ENCODE measurements at regions of chr1 and their contacts with region 1.

Region 1: GRCh38 chr1:155934097-155934935 is at the start of gene KHDC4:
- DNase-seq: peak; percentile 88
- ATAC-seq: peak; percentile 97
- H3K4me3 Mint-ChIP-seq: no peak within 1 kb of the TSS
- H3K27ac Mint-ChIP-seq: no peak within 1 kb of the TSS
- H3K4me1 Mint-ChIP-seq: peaks cover 28% of the 10 kb centered on the region
- H3K27me3 Mint-ChIP-seq: no peaks in the 10 kb centered on the region
- total RNA-seq, gene KHDC4: 91.6 to 94.5 TPM

Region 2: DNA sequence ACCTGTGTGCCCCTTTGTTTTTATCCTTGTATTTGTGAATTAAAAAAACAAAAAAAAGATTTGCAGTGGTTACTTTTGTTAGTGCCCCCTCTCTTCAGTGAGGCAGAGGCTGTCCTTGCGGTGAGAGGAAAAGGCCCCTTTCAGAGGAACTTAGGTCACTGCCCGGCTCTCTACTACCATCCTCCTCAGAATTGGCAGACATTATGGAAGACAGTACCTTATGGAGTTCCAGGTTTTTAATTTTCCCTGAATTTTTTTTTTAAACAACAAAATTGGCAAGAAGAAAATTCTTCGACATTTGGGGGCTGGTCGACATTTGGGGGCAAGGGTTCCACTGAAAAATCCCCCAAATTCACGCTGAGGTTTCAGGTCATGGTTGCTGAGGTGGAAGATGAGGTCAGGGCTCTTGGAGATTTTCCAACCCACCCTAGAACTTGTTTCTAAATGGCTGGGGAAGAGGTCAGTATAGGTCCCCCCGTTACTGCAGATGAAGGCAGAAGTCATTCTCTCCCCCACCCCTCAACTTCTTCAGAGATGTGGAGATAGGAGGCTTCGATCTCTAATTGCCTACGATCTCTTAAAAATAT is 12.4 kb after region 1 on chr1:
- POLR2A ChIA-PET with region 1: interaction called, 15 read pairs
- DNase-seq: no peak
- ATAC-seq: no peak
- H3K4me3 Mint-ChIP-seq: peak overlapping the region; percentile 71
- H3K27ac Mint-ChIP-seq: peak overlapping the region; percentile 91
- H3K4me1 Mint-ChIP-seq: peaks cover 35% of the 10 kb centered on the region
- H3K27me3 Mint-ChIP-seq: no peaks in the 10 kb centered on the region

Region 3: DNA sequence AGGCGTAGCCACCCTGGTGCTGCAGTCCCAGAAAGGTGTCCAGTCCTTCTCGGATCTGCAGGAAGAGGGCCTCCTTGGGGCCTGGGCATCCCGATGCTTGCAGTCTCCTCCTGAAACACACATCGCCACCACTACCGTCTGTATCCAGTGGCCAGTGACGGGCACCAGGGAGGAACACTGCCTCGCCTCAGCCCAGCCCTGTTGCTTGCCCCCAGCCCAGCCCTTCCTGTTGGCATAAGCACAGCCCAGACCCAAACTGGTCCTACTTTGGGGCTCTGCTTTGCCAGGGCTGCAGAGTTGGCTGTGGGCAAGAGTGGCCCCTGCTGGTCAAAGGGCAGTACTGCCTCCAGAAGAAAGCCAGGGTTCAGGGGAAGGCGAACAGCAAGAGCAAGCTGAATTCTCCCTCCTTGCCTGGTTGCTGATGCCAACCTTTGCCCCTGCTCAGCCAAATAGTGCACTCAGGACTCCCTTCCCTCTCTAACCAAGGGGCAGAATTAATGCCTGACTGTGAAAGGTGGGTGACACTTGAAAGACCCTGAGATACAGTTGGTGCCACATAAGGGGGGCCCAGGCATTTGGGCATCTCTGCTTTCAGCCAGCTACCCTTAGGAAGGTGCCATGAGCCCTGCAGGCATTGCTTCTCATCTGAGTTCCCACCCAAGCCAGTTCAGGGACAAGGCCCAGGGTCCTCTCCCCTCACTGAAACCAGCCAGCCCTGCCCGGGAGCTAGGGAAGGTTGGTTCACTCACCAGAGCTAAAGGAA is 55.1 kb after region 1 on chr1:
- POLR2A ChIA-PET with region 1: interaction called, 14 read pairs
- DNase-seq: peak; percentile 85
- ATAC-seq: peak; percentile 97
- H3K4me3 Mint-ChIP-seq: no peak overlapping the region
- H3K27ac Mint-ChIP-seq: peak overlapping the region; percentile 65
- H3K4me1 Mint-ChIP-seq: peaks cover 14% of the 10 kb centered on the region
- H3K27me3 Mint-ChIP-seq: no peaks in the 10 kb centered on the region

Region 4: GRCh38 chr1:156065871-156066270 is 131.6 kb after region 1 on chr1:
- POLR2A ChIA-PET with region 1: interaction called, 11 read pairs
- DNase-seq: no peak
- ATAC-seq: no peak
- H3K4me3 Mint-ChIP-seq: no peak overlapping the region
- H3K27ac Mint-ChIP-seq: no peak overlapping the region
- H3K4me1 Mint-ChIP-seq: peaks cover 8% of the 10 kb centered on the region
- H3K27me3 Mint-ChIP-seq: no peaks in the 10 kb centered on the region

Measured in activated naive CD8-positive, alpha-beta T cell treated with anti-CD3 and anti-CD28 coated beads, Interleukin-2, amount 10 ng/mL, durations not matched to agents 7 days and 5 days (primary cell).